Activated naive CD4-positive, alpha-beta T cell treated with anti-CD3 and anti-CD28 coated beads, Interleukin-2, amount 10 ng/mL, durations not matched to agents 7 days and 5 days (primary cell): ENCODE measurements at regions of chr14 and their contacts with region 1.

Region 1: DNA sequence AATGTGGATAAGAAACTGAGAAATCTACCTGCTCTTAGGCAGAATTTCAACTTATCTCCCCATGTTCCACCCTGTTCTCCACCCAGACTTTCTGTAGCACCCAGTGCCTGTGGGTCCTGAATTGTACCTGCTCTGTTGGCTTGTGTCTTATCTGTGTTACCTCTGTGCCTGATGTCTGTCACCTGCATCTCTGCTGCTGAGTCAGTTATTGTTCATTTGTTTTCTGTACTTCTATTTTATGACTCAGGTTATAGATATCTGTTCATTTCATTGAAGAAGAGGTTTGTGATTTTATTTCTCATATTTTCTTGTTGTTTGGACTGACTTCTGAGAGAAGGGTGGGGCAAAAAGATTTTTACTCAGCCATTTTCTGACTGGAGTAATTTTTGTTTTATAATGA is 11.7 kb downstream of the SOCS4 start:
- DNase-seq: no peak
- H3K4me3 Mint-ChIP-seq: no peak overlapping the region
- H3K27ac Mint-ChIP-seq: no peak overlapping the region
- H3K4me1 Mint-ChIP-seq: no peaks in the 10 kb centered on the region
- H3K27me3 Mint-ChIP-seq: no peaks in the 10 kb centered on the region

Region 2: DNA sequence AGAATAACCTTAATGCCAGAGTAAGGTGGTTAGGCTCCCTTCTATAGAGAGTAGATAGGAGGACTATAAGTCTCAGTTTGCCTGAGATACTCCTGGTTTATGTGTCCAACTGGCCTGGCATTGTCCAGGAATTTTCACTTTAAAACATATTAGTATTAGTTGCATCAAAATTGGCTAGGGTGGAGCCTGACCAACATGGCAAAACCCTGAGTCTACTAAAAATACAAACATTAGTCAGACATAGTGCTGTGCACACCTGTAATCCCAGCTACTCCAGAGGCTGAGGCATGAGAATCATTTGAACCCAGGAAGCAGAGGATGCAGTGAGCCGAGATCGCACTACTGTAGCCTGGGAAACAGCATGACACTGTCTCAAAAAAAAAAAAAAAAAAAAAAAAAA is 23.7 kb before region 1 on chr14:
- CTCF ChIA-PET with region 1: no interaction called
- DNase-seq: no peak
- H3K4me3 Mint-ChIP-seq: no peak overlapping the region
- H3K27ac Mint-ChIP-seq: no peak overlapping the region
- H3K4me1 Mint-ChIP-seq: no peaks in the 10 kb centered on the region
- H3K27me3 Mint-ChIP-seq: no peaks in the 10 kb centered on the region

Region 3: GRCh38 chr14:55026793-55027561 is 11.7 kb before region 1 on chr14 and contains the starts of genes SOCS4 and WDHD1:
- CTCF ChIA-PET with region 1: no interaction called
- DNase-seq: peak; percentile 98
- H3K4me3 Mint-ChIP-seq: peak within 1 kb of the TSS; percentile 90
- H3K27ac Mint-ChIP-seq: peak within 1 kb of the TSS; percentile 91
- H3K4me1 Mint-ChIP-seq: peaks cover 56% of the 10 kb centered on the region
- H3K27me3 Mint-ChIP-seq: no peaks in the 10 kb centered on the region

Region 4: GRCh38 chr14:55051426-55052268 is 12.9 kb after region 1 on chr14 and contains the start of gene MAPK1IP1L:
- CTCF ChIA-PET with region 1: interaction called, 13 read pairs
- DNase-seq: peak; percentile 91
- H3K4me3 Mint-ChIP-seq: peak within 1 kb of the TSS; percentile 86
- H3K27ac Mint-ChIP-seq: peak within 1 kb of the TSS; percentile 91
- H3K4me1 Mint-ChIP-seq: peaks cover 40% of the 10 kb centered on the region
- H3K27me3 Mint-ChIP-seq: no peaks in the 10 kb centered on the region

Region 5: GRCh38 chr14:55201224-55202050 is 162.7 kb after region 1 on chr14:
- CTCF ChIA-PET with region 1: no interaction called
- DNase-seq: no peak
- H3K4me3 Mint-ChIP-seq: no peak overlapping the region
- H3K27ac Mint-ChIP-seq: no peak overlapping the region
- H3K4me1 Mint-ChIP-seq: no peaks in the 10 kb centered on the region
- H3K27me3 Mint-ChIP-seq: peaks cover 44% of the 10 kb centered on the region